Heart right ventricle (tissue), 16 donors: ENCODE measurements at regions of chr12 and their contacts with region 1.

Region 1: GRCh38 chr12:56104109-56104814 is at the start of gene PA2G4:
- DNase-seq: peak; percentile 97 to 98
- ATAC-seq: peak; percentile 98 to 99 (median 98)
- H3K4me3 ChIP-seq: peak within 1 kb of the TSS; percentile 62 to 97 (median 87)
- H3K27ac ChIP-seq: peak within 1 kb of the TSS; percentile 62 to 93 (median 87)
- H3K4me1 ChIP-seq: peaks cover 9 to 30% (median 25%) of the 10 kb centered on the region in 9 donors
- H3K27me3 ChIP-seq: no peaks in the 10 kb centered on the region
- CTCF ChIP-seq: peak in 2 of 9 donors; percentile 12 to 15
- total RNA-seq, gene PA2G4: 64.3 to 91.9 (median 71.5) TPM

Region 2: GRCh38 chr12:55996715-55997534 is 107.3 kb before region 1 on chr12 and contains the start of gene SUOX:
- intact Hi-C with region 1: loop called in 1 of 10 experiments (anchors 10 kb)
- DNase-seq: peak; percentile 94 to 97
- ATAC-seq: peak; percentile 98 to 100 (median 99)
- H3K4me3 ChIP-seq: peak within 1 kb of the TSS; percentile 19 to 79 (median 66)
- H3K27ac ChIP-seq: peak within 1 kb of the TSS in 9 of 10 donors; percentile 62 to 93 (median 83)
- H3K4me1 ChIP-seq: peaks cover 5 to 22% (median 11%) of the 10 kb centered on the region in 9 donors
- H3K27me3 ChIP-seq: no peaks in the 10 kb centered on the region
- CTCF ChIP-seq: no peak
- total RNA-seq, gene SUOX: 28.2 to 44.8 (median 31.4) TPM

Region 3: DNA sequence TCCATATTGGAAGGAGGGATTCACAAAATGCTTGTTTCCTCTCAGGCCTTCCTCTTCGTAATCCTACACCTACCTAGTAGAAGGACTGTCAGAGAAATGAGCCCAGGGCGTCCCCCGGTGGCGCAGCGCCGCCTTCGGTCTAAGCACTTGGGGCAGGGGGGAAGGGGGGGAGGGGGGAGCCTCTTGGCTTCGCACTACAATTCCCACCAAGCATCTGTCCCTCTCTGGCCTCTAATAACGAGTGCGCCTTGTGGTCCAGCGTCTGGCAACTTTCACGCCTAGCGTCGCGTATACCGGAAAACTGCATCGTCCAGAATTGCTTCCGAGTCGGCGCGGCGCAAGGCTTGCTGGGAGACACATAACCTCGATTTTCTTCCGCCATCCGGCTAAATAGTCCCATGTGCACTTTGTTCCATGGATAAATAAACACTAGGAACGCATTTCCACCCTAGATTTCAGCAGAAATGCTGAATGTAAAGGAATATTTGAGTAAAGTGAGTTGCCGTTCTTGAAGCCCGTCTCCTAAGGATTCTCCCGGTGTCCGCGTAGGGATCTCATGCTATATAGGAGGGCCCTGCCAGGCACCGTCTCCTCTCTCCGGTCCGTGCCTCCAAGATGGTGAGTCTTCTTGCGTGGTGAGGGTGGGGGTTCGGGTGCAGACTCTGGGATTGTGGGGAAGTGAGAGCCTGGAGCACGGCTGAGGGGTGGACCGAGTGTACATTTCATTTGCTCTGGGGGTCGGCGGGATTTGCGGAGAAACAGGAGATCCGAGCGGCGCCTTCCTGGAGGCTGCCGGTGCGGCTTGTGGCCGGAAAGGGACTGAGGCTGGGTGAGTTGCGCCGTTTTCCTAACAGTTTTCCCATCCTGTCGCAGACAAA is 62.5 kb before region 1 on chr12 and contains the start of gene RPS26:
- intact Hi-C with region 1: loop called in 3 of 10 experiments (anchors 5 to 10 kb)
- DNase-seq: peak; percentile 94 to 98
- ATAC-seq: peak; percentile 95 to 99 (median 97)
- H3K4me3 ChIP-seq: peak within 1 kb of the TSS; percentile 57 to 96 (median 80)
- H3K27ac ChIP-seq: peak within 1 kb of the TSS; percentile 92 to 99 (median 97)
- H3K4me1 ChIP-seq: peaks cover 0 to 23% (median 18%) of the 10 kb centered on the region in 9 donors
- H3K27me3 ChIP-seq: no peaks in the 10 kb centered on the region
- CTCF ChIP-seq: peak in 8 of 9 donors; percentile 34 to 69 (median 54)
- total RNA-seq, gene RPS26: 6.9 to 39.6 (median 19.3) TPM

Region 4: GRCh38 chr12:56078990-56079664 is 25.1 kb before region 1 on chr12:
- intact Hi-C with region 1: loop called in 2 of 10 experiments (anchors 1 kb)
- DNase-seq: peak; percentile 81 to 86
- ATAC-seq: peak; percentile 83 to 94 (median 89)
- H3K4me3 ChIP-seq: peak overlapping the region; percentile 19 to 70 (median 56)
- H3K27ac ChIP-seq: peak overlapping the region in 9 of 10 donors; percentile 3 to 55 (median 41)
- H3K4me1 ChIP-seq: peaks cover 0 to 23% (median 18%) of the 10 kb centered on the region in 9 donors
- H3K27me3 ChIP-seq: peaks cover 0 to 32% (median 9%) of the 10 kb centered on the region in 7 donors
- CTCF ChIP-seq: peak; percentile 52 to 79 (median 68)